Naive thymus-derived CD4-positive, alpha-beta T cell (primary cell): ENCODE measurements at regions of chr13 and their contacts with region 1.

Region 1: GRCh38 chr13:51895906-51896888 is 34.4 kb downstream of the CCDC70 start:
- DNase-seq: peak in 8 of 9 donors; percentile 16 to 55 (median 40)
- ATAC-seq: peak; percentile 73
- H3K4me3 ChIP-seq: no peak overlapping the region
- H3K4me3 Mint-ChIP-seq: no peak overlapping the region
- H3K27ac ChIP-seq: no peak overlapping the region
- H3K27ac Mint-ChIP-seq: peak overlapping the region in 2 of 9 donors; percentile 22 to 42
- H3K4me1 ChIP-seq: no peaks in the 10 kb centered on the region
- H3K4me1 Mint-ChIP-seq: peaks cover 0 to 8% (median 0%) of the 10 kb centered on the region in 7 donors
- H3K27me3 ChIP-seq: no peaks in the 10 kb centered on the region
- H3K27me3 Mint-ChIP-seq: peaks cover 7 to 26% (median 11%) of the 10 kb centered on the region in 5 donors

Region 2: DNA sequence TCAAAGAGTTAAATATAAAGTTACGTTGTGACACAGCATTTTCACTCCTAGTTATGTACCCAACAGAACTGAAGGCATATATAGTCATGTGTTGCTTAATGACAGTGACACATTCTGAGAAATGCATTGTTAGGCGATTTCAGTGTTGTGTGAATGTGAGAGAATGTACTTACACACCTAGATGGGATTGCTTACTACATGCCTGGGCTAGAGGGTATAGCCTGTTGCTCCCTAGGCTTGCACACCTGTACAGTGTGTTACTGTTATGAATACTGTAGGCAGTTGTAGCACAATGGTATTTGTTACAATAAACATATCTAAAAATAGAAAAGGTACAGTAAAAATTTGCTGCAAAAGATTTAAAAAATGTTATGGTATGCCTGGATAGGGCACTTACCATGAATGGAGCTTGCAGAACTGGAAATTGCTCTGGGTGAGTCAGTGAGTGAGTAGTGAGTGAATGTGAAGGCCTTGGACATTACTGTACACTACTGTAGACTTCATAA is 181.5 kb before region 1 on chr13:
- CTCF ChIA-PET with region 1: no interaction called
- POLR2A ChIA-PET with region 1: no interaction called
- intact Hi-C with region 1: no loop called
- DNase-seq: no peak
- ATAC-seq: peak; percentile 65
- H3K4me3 ChIP-seq: no peak overlapping the region
- H3K4me3 Mint-ChIP-seq: no peak overlapping the region
- H3K27ac ChIP-seq: no peak overlapping the region
- H3K27ac Mint-ChIP-seq: no peak overlapping the region
- H3K4me1 ChIP-seq: no peaks in the 10 kb centered on the region
- H3K4me1 Mint-ChIP-seq: peaks cover 0 to 4% (median 2%) of the 10 kb centered on the region in 7 donors
- H3K27me3 ChIP-seq: no peaks in the 10 kb centered on the region
- H3K27me3 Mint-ChIP-seq: no peaks in the 10 kb centered on the region

Region 3: GRCh38 chr13:52001120-52001731 is 105.0 kb after region 1 on chr13:
- CTCF ChIA-PET with region 1: no interaction called
- POLR2A ChIA-PET with region 1: interaction called, 5 read pairs
- intact Hi-C with region 1: loop called in 1 of 2 experiments (anchors 1 kb)
- DNase-seq: peak in 6 of 9 donors; percentile 16 to 49 (median 38)
- ATAC-seq: peak; percentile 83
- H3K4me3 ChIP-seq: no peak overlapping the region
- H3K4me3 Mint-ChIP-seq: no peak overlapping the region
- H3K27ac ChIP-seq: no peak overlapping the region
- H3K27ac Mint-ChIP-seq: no peak overlapping the region
- H3K4me1 ChIP-seq: no peaks in the 10 kb centered on the region
- H3K4me1 Mint-ChIP-seq: peaks cover 0 to 7% (median 4%) of the 10 kb centered on the region in 7 donors
- H3K27me3 ChIP-seq: no peaks in the 10 kb centered on the region
- H3K27me3 Mint-ChIP-seq: peaks cover 0 to 35% (median 4%) of the 10 kb centered on the region in 5 donors